ENCODE measurements at regions of chr14 and their contacts with region 1.

Region 1: DNA sequence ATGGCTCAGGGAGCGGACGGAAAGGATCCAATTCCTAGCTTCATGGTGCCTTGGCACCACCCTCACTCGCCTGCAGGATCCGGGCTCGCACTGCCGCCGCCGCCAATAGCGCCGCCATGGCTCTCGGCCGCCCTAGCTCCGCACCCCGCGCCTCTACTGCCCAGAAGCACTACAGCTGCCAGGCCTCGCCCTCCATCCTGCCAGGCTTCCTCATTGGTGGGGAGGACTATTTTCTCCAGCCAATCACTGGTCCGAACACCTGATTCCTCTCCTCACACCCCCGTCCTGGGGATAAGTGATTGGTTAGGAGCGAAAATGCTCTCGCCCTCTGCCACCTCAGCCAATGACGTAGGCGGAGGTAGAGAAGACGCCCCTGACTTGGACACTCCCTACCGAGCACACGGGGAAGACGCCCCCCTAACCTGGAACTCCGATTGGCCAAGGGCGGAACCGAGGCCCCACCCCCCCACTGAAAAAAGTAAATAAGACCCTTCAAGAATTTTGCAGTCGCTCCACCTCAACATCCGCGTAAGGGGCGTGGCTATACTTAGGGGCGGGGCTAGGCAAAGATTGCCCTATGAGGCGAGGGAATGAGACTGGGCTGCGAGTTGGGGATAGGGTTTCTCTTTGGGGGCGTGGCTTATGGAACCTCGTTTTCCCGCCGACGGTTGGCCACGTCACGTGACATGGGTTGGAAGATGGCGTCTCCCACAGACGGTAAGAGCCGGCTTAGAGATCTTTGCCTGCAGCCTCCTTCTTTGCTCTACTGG is at the starts of genes ALDH6A1 and LIN52:
- DNase-seq: peak; percentile 100
- H3K4me3 Mint-ChIP-seq: peak within 1 kb of the TSS; percentile 100
- H3K27ac Mint-ChIP-seq: peak within 1 kb of the TSS; percentile 98
- H3K4me1 Mint-ChIP-seq: peaks cover 39% of the 10 kb centered on the region
- H3K27me3 Mint-ChIP-seq: no peaks in the 10 kb centered on the region
- total RNA-seq, gene ALDH6A1: 25.0 to 25.7 TPM
- total RNA-seq, gene LIN52: 13.5 to 14.4 TPM

Region 2: DNA sequence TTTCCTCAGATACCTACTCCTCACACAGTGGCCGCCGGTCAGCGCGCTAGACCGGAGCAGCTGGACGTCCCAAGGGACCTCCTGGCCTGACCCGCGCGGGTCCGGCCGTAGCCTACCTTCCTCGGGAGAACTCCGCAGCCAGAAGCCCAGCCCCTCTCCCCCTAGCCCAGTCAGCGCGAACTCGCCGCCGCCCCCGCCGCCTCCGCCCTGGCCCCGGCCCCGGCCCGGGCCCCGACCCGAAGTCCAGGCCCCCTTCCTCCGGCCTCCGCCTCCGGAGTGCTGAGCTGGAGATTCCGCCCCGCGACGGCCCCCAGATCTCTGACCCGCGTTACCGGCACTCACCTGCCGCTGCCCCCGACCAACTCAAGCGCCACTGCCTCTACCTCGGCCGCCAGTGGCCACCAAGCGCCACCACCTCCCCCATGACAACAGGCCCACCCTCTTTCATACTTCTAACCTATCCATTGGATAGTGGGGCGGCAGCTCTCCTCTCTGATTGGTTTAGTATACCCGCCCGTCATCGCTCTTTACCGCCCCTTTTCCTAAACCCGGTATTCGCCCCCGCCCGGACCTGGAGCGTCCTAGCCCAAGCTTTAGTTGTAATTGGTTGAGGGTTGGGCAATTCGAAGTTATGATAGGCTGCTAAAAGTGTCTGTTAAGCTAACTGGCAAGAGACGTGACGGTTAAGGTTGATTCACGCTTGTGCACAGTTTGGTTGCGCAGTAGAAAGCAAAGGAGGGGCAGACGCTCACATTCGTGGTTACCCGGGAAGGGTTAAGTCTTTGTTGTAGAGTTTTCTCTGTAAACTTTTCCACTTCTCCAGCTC is 626.1 kb before region 1 on chr14 and contains the start of gene NUMB:
- CTCF ChIA-PET with region 1: no interaction called
- POLR2A ChIA-PET with region 1: no interaction called
- intact Hi-C with region 1: loop called (anchors 1 kb)
- DNase-seq: peak; percentile 98
- H3K4me3 Mint-ChIP-seq: peak within 1 kb of the TSS; percentile 100
- H3K27ac Mint-ChIP-seq: peak within 1 kb of the TSS; percentile 94
- H3K4me1 Mint-ChIP-seq: peaks cover 44% of the 10 kb centered on the region
- H3K27me3 Mint-ChIP-seq: no peaks in the 10 kb centered on the region
- total RNA-seq, gene NUMB: 45.0 to 46.9 TPM

Region 3: DNA sequence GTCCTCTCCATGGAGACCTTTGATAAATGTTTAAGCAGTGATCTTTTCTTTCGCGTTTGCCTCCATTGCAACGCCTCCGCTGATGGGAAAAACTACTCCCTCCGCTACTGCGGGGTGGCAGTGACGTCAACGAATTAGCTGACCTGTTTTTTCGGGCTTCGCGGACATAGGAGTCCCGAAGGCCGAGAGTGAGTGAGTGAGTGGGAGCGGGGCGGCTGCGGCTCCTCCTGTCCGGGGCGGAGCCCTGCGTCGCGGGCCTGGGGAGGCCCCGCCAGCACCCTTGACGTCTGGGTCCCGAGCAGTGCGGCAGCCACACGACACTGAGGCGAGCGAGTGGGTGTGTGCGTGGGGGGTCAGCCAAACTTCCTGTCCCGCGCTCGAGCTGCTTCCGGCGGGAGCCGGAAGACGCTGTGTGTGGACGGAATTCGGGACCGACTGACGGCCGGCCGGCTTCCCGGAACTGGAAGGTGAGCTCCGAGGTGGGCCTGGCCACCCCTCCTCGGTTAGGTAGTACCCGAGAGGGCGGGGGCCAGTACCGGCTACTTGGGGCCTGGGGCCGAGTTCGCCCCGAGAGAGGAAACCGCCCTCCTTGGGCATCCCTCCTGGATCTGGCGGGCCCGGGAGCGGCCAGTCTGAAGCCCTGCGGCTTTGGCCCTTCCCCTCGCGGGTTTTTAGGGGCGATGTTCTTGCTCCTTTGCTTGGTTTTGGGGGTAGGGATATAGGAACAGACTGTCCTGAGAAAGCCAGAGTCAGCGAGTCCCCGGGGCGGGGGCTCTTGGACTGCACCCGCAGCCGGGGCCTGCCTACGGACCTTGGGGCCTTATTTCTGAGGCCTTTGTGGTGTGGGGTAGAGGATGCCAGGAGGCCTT is 197.8 kb before region 1 on chr14 and contains the start of gene ZNF410:
- CTCF ChIA-PET with region 1: no interaction called
- POLR2A ChIA-PET with region 1: interaction called, 3 read pairs
- intact Hi-C with region 1: loop called (anchors 1 kb)
- DNase-seq: peak; percentile 97
- H3K4me3 Mint-ChIP-seq: peak within 1 kb of the TSS; percentile 93
- H3K27ac Mint-ChIP-seq: peak within 1 kb of the TSS; percentile 95
- H3K4me1 Mint-ChIP-seq: peaks cover 47% of the 10 kb centered on the region
- H3K27me3 Mint-ChIP-seq: no peaks in the 10 kb centered on the region
- total RNA-seq, gene ZNF410: 65.2 to 68.7 TPM

Region 4: DNA sequence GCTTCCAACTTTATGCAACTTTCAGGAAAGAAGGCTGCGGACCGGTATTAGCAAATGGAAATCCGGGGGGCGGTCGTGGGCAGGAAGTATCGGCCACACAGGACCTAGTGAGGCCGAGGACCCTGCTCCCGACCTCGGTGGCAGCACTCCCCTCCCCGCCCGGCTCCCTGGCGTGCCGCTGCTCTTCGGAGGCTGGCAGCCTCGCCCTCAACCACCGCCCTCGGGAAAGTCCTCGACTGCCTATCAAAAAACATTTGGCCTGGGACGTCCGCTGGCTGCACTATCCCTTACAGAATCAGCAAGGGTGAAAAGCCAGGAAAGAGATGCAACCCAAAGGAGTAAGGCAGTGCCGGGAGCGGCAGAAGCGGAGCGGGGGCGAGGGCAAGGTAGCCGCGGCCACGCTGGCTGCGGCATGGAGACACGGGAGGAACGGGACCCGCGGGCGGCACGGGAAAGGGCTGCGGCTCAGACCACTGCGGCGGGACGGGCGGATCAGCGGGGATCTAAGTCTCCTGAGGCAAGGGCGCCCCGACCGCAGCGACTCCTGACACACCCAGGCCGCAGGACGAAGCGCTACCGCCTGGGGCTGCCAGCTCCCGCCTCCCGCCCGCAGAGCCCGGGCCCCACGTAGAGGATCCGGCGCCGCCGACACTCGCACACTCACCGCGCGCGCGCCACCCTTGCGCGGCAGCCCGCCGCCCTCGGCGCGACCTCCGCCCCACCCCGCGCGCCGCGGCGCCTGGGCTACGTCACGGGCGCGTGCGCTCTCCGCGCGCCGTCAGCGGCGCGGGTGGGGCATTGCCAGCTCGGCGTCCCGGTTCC is 65.7 kb before region 1 on chr14 and contains the starts of genes BBOF1 and ENTPD5:
- CTCF ChIA-PET with region 1: interaction called, 3 read pairs
- POLR2A ChIA-PET with region 1: interaction called, 8 read pairs
- intact Hi-C with region 1: loop called (anchors 1 kb)
- DNase-seq: peak; percentile 87
- H3K4me3 Mint-ChIP-seq: peak within 1 kb of the TSS; percentile 95
- H3K27ac Mint-ChIP-seq: peak within 1 kb of the TSS; percentile 89
- H3K4me1 Mint-ChIP-seq: peaks cover 5% of the 10 kb centered on the region
- H3K27me3 Mint-ChIP-seq: no peaks in the 10 kb centered on the region
- total RNA-seq, gene BBOF1: 1.0 to 1.3 TPM
- total RNA-seq, gene ENTPD5: 10.2 to 11.2 TPM

Region 5: DNA sequence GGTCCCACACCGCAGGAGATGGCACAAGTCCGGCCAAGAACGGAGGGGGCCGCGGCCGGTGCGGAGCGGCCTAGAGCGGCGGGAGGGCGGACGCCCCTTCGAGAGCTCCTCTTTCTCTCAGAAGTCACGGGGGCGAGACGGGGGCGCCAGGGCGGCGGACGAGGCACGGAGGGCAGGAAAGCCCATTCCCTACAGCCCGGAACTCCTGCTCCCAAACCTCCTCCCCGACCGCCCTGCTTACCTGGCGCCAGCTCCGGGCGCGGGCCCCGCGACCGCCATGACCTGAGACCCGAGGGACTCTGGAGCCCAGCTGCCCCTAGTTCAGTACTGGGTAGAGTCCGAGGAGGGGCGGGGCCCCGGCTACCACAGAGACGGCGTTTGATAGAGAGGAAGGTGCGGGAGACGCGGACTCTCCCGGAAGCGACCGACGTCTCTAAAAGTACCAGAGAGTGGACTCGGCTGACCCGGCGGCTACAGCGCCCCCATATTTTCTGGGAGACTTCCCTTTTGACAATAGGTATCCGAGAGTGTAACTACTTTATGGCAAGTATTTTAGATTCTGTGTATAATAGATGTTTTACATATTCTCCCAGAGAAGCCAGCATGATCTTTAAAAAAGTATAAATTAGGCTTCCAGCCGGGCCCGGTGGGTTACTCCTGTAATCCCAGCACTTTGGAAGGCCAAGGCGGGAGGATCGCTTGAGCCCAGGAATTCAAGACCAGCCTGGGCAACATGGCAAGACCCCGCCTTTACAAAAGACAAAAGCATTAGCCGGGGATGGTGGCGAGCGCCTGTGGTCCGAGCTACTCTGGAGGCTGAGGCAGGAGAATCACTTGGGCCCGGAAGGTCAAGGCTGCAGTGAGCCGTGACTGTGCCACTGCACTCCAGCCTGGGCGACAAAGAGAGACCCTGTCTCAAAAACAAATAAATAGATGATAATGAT is 218.4 kb after region 1 on chr14 and contains the start of gene ABCD4:
- CTCF ChIA-PET with region 1: no interaction called
- POLR2A ChIA-PET with region 1: no interaction called
- intact Hi-C with region 1: loop called (anchors 1 kb)
- DNase-seq: peak; percentile 92
- H3K4me3 Mint-ChIP-seq: peak within 1 kb of the TSS; percentile 100
- H3K27ac Mint-ChIP-seq: peak within 1 kb of the TSS; percentile 94
- H3K4me1 Mint-ChIP-seq: peaks cover 32% of the 10 kb centered on the region
- H3K27me3 Mint-ChIP-seq: no peaks in the 10 kb centered on the region
- total RNA-seq, gene ABCD4: 42.7 to 47.7 TPM

Region 6: DNA sequence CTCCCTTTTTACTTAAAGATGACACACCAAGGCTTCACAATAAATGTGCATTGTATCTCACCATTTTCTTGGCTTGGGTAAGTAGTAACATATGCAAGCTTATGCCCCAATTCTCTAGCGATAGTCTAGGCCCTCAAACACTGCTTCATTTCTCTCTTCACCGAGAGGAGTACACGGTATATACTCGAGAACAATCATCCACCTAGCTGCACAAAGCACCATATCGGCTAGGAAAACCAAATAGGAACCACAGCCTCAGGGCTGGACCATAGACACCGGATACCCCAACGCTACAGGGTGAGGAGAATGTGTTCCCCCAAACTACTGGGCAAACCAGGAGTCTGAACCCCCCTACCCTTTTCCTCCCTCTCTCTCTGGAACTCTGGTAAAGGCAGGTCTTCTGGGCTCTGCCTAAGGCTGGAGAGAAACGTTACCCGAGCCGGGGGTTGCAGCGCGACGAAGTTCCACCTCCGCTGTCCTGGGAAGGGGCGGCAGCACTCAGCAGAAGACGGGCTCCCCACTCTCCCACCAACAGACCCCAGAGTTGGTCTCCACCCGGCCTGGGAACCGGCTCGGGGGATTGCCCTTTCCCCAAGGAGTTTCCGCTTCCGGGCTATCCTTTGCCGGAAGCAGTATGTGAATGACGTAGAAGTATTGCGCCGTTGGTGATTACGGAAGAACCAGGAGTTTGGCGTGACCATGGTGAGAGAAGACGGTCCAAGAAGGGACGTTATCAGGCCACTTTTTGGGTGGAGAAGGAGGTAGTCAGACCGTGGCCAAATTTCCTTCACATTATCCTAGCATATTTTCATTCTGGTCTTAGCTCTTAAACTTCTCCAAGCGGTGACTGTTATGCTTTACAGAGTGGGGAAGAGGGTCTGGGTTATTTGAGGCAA is 628.3 kb after region 1 on chr14 and contains the starts of genes AREL1 and FCF1:
- CTCF ChIA-PET with region 1: no interaction called
- POLR2A ChIA-PET with region 1: no interaction called
- intact Hi-C with region 1: loop called (anchors 5 kb)
- DNase-seq: peak; percentile 90
- H3K4me3 Mint-ChIP-seq: peak within 1 kb of the TSS; percentile 99
- H3K27ac Mint-ChIP-seq: peak within 1 kb of the TSS; percentile 89
- H3K4me1 Mint-ChIP-seq: peaks cover 44% of the 10 kb centered on the region
- H3K27me3 Mint-ChIP-seq: no peaks in the 10 kb centered on the region
- total RNA-seq, gene AREL1: 31.9 to 34.6 TPM
- total RNA-seq, gene FCF1: 72.1 to 72.5 TPM

Measured in activated CD4-positive, alpha-beta memory T cell treated with anti-CD3 and anti-CD28 coated beads for 36 hours (primary cell).